ENCODE measurements at regions of chr2 and their contacts with region 1.

Region 1: DNA sequence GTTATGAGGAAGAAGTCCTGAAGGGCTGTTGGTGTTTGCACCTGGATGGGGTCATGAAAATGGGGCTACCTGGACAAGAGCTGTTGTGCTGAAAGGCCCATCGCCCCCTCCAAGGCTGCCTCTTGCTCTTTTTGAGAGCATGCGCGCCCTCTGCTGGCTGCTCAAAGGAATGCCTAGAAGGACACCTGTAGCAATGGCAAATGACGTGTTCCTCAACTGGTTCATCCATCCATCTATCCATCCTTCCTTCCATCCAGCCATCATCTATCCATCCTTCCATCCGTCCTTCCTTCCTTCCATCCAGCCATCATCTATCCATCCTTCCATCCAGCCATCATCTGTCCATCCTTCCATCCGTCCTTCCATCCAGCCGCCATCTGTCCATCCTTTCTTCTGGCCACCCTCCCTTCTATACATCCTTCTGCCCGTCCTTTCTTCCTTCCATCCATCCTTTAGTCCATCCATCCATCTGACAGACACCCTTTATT is 17.2 kb upstream of the RPL31 start:
- DNase-seq: peak; percentile 77
- H3K4me3 ChIP-seq: no peak overlapping the region
- H3K27ac ChIP-seq: no peak overlapping the region
- H3K4me1 ChIP-seq: no peaks in the 10 kb centered on the region
- H3K27me3 ChIP-seq: no peaks in the 10 kb centered on the region
- CTCF ChIP-seq: peak; percentile 87 to 92 (median 90)
- EP300 ChIP-seq: no peak
- POLR2A ChIP-seq: no peak

Region 2: DNA sequence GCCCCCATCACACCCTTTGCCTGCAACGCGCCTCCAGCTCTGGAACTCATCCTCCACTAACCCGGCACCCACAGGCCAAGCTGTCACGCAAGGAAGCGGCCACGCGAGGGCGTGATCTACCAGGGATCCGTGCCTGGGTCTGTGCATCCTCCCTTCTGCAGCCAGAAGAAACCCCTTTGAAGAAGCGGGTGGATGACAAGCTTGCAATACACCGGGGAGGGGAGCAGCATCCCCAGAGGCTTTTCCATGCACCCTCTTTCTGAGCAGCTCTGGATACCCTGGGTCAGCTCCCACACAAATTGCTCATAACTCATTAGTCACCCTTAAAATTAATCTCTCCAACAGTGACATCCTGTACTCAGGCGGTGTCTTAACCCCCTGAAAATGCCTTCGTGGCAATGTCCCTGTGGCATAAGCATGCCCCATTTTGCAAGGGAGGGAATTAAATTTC is 374.5 kb before region 1 on chr2:
- in situ Hi-C with region 1: loop called (anchors 10 to 25 kb)
- intact Hi-C with region 1: loop called (anchors 5 kb)
- DNase-seq: peak; percentile 54
- H3K4me3 ChIP-seq: no peak overlapping the region
- H3K27ac ChIP-seq: no peak overlapping the region
- H3K4me1 ChIP-seq: no peaks in the 10 kb centered on the region
- H3K27me3 ChIP-seq: no peaks in the 10 kb centered on the region
- CTCF ChIP-seq: peak; percentile 29 to 54 (median 39)
- EP300 ChIP-seq: no peak
- POLR2A ChIP-seq: no peak

Region 3: DNA sequence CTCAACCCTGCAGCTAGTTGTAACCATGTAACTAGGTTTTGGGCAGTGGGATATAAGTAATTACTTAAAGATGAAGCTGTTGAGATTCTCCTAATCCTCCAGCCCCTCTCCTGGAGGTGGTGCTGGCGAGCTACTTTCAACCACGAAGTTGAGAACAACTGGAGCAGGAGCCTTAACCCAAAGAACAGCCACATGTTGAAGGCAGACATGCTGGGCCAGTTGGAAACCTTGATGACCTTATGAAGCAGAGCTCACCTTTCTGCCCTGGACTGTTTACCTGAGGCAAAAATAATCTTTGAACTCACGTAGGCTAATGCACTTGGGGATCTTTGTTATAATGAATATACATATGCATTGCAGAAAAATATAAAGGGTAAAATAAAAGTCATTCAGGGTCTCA is 254.6 kb before region 1 on chr2:
- in situ Hi-C with region 1: loop called in 3 of 4 experiments (anchors 5 to 10 kb)
- intact Hi-C with region 1: loop called (anchors 5 kb)
- DNase-seq: peak; percentile 70
- H3K4me3 ChIP-seq: no peak overlapping the region
- H3K27ac ChIP-seq: no peak overlapping the region
- H3K4me1 ChIP-seq: no peaks in the 10 kb centered on the region
- H3K27me3 ChIP-seq: no peaks in the 10 kb centered on the region
- CTCF ChIP-seq: peak; percentile 60 to 76 (median 62)
- EP300 ChIP-seq: no peak
- POLR2A ChIP-seq: no peak

Region 4: GRCh38 chr2:100826494-100826893 is 158.4 kb before region 1 on chr2:
- in situ Hi-C with region 1: no loop called
- intact Hi-C with region 1: loop called (anchors 5 kb)
- DNase-seq: no peak
- H3K4me3 ChIP-seq: no peak overlapping the region
- H3K27ac ChIP-seq: no peak overlapping the region
- H3K4me1 ChIP-seq: peaks cover 0 to 12% (median 2%) of the 10 kb centered on the region in 4 donors
- H3K27me3 ChIP-seq: no peaks in the 10 kb centered on the region
- CTCF ChIP-seq: no peak
- EP300 ChIP-seq: no peak
- POLR2A ChIP-seq: no peak

Region 5: GRCh38 chr2:101036562-101037457 is 51.9 kb after region 1 on chr2:
- in situ Hi-C with region 1: no loop called
- intact Hi-C with region 1: no loop called
- DNase-seq: no peak
- H3K4me3 ChIP-seq: no peak overlapping the region
- H3K27ac ChIP-seq: no peak overlapping the region
- H3K4me1 ChIP-seq: no peaks in the 10 kb centered on the region
- H3K27me3 ChIP-seq: no peaks in the 10 kb centered on the region
- CTCF ChIP-seq: peak; percentile 43 to 49 (median 45)
- EP300 ChIP-seq: no peak
- POLR2A ChIP-seq: no peak

Measured in transverse colon (tissue), 4 donors.